Transverse colon (tissue), 4 donors: ENCODE measurements at regions of chr18 and their contacts with region 1.

Region 1: GRCh38 chr18:32769693-32770665 is 2.8 kb downstream of the KLHL14 start:
- DNase-seq: no peak
- H3K4me3 ChIP-seq: peak overlapping the region in 2 of 4 donors; percentile 31 to 54
- H3K27ac ChIP-seq: no peak overlapping the region
- H3K4me1 ChIP-seq: peaks cover 17 to 22% (median 22%) of the 10 kb centered on the region in 4 donors
- H3K27me3 ChIP-seq: peaks cover 63% of the 10 kb centered on the region
- CTCF ChIP-seq: no peak
- EP300 ChIP-seq: no peak
- POLR2A ChIP-seq: no peak

Region 2: DNA sequence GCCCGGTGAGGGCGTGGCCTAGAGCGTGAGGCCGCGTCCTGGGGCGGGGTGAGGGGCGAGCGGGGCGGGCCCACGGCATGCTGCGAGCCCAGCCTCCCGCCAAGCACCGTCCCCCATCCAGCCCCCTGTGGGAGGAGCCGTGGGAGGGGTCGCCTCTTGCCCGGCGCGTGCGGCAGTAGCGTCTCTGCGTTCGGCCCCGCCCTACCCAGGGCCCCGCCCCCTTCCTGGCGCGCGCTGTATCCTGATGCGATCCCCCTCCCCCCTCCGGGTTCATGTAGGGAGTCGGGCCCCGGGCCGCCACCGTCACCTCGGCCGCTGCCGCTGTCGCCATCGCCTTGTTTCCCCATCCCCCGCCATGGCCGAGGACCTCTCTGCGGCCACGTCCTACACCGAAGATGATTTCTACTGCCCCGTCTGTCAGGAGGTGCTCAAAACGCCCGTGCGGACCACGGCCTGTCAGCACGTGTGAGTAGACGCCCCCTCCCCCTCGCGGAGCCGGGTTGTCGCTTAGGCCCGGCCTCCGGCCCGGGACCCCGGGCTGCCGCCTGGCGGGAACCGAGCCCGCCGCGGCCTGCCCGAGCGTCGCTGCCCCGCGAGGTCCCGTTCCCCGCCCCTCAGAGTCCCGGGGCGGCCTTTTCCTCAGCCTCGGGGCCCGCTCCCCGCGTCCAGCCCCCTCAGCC is 677.4 kb before region 1 on chr18:
- in situ Hi-C with region 1: no loop called
- intact Hi-C with region 1: no loop called
- DNase-seq: peak; percentile 100
- H3K4me3 ChIP-seq: peak overlapping the region; percentile 85 to 98 (median 88)
- H3K27ac ChIP-seq: peak overlapping the region; percentile 100
- H3K4me1 ChIP-seq: peaks cover 16 to 44% (median 26%) of the 10 kb centered on the region in 4 donors
- H3K27me3 ChIP-seq: no peaks in the 10 kb centered on the region
- CTCF ChIP-seq: no peak
- EP300 ChIP-seq: no peak
- POLR2A ChIP-seq: peak; percentile 58

Region 3: GRCh38 chr18:32815881-32816280 is 45.9 kb after region 1 on chr18:
- in situ Hi-C with region 1: no loop called
- intact Hi-C with region 1: loop called (anchors 1 kb)
- DNase-seq: no peak
- H3K4me3 ChIP-seq: no peak overlapping the region
- H3K27ac ChIP-seq: no peak overlapping the region
- H3K4me1 ChIP-seq: no peaks in the 10 kb centered on the region
- H3K27me3 ChIP-seq: no peaks in the 10 kb centered on the region
- CTCF ChIP-seq: no peak
- EP300 ChIP-seq: no peak
- POLR2A ChIP-seq: no peak